ENCODE measurements at regions of chr22 and their contacts with region 1.

Region 1: GRCh38 chr22:41237707-41238569 is 2.8 kb downstream of the CHADL start:
- DNase-seq: peak; percentile 79
- H3K4me3 Mint-ChIP-seq: peak overlapping the region; percentile 71
- H3K27ac Mint-ChIP-seq: no peak overlapping the region
- H3K4me1 Mint-ChIP-seq: no peaks in the 10 kb centered on the region
- H3K27me3 Mint-ChIP-seq: peaks cover 2% of the 10 kb centered on the region

Region 2: DNA sequence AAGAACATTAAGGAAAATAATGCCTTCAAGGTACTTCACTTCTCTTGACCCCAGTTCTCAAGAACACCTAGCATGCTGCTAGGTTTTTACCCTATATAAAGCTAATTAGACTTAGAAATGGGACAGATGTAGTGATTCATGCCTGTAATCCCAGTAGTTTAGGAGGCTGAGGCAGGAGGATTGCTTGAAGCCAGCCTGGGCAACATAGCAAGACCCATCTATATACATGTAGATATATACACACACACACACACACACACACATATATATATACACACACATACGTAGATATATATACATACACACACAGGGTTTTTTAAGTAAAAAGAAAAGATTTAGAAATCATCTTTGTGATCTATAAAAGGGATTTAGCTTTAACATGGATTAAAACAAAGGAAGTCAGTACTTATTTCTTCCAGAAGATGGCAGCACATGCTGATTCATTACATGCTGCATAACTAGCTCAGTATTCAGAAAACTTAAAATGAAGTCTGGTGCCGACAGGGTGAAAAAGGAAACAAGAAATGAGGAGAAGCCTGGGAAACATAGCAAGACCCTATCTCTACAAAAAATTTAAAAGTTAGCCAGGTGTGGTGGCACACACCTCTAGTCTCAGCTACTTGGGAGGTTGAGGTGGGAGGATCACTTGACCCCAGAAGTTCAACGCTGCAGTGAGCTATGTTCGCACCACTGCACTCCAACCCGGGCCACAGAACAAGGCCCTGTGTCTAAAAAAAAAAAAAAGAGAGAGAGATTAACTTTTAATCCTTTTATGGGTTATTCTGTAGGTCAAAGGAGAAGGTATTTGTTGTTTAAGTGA is 315.2 kb before region 1 on chr22:
- intact Hi-C with region 1: loop called (anchors 1 kb)
- DNase-seq: peak; percentile 8
- H3K4me3 Mint-ChIP-seq: peak overlapping the region; percentile 4
- H3K27ac Mint-ChIP-seq: peak overlapping the region; percentile 5
- H3K4me1 Mint-ChIP-seq: peaks cover 8% of the 10 kb centered on the region
- H3K27me3 Mint-ChIP-seq: no peaks in the 10 kb centered on the region